ENCODE measurements at regions of chr20 and their contacts with region 1.

Region 1: DNA sequence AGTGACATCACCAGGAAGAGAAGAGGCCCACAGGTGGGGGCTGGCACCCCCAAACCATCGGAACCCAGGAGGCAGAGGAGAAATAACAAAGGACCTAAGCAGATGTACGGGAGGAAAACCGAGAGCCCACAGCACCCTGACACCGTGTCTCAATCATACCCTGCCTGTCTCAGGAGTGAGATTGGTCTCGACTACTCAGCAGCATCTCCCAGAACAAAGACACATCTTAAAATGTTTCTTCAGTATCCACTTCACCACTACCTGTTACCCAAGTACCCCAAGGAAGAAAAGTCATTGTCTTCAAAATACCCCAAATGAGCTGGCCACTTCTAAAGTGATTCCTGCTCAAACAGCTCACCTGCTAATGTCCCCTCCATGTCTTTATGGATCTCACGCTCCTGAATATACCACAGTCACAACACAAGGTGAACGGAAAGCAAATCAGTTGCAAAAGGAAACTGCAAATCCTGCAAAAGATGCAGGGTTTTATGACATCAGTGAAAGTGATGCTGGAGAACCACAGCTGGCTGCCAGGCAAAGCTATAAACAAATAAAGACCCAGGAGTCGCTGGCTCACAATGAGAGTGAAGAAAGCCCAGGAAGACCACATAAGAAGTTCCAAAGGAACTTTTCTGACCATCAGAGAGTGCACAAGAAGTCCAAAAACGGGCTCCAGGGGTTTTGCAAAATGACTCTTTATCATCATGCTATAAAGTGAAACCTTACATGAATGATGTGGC is 44.1 kb downstream of the PREX1 start:
- DNase-seq: peak; percentile 87
- H3K4me3 Mint-ChIP-seq: no peak overlapping the region
- H3K27ac Mint-ChIP-seq: no peak overlapping the region
- H3K4me1 Mint-ChIP-seq: peaks cover 38% of the 10 kb centered on the region
- H3K27me3 Mint-ChIP-seq: no peaks in the 10 kb centered on the region

Region 2: GRCh38 chr20:48760403-48760983 is 23.2 kb before region 1 on chr20:
- intact Hi-C with region 1: loop called (anchors 1 kb)
- DNase-seq: peak; percentile 93
- H3K4me3 Mint-ChIP-seq: peak overlapping the region; percentile 75
- H3K27ac Mint-ChIP-seq: peak overlapping the region; percentile 97
- H3K4me1 Mint-ChIP-seq: peaks cover 76% of the 10 kb centered on the region
- H3K27me3 Mint-ChIP-seq: no peaks in the 10 kb centered on the region

Region 3: DNA sequence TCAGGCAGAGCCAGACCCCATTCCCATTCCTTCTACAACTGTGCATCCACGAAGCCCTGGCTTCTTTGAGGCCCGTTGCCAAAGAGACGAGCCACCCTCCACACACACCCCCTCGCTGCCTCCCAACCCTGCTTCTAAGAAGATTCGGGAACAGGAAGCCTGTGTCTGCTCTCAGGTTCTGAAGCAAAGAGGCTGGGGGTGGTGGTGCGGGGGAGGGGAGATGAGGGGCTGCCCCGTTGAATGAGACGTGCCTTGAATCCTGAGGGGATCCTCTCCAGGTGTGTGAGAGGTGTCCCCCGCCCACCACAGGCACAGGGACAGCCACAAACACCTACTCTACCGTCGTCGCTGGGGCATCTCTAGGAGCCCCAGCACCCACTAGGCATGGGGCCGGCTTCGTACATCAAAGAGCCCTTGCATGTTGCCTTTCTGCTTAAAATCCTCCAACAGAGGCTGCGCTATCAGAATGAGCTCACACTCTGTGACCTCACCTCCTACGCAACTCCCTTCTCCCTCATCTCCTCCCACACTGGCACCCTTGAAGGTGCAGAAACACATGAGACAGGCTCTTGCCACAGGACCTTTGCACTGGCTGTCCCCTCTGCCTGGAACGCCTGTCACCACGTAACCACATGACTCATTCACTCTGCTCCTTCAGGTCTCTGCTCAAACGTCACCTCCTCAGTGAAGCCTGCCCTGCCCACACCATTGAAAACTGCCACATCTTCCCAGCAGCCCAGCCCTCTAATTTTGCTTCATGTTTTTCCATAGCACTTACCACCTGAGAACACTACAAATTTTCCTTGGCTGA is 14.4 kb before region 1 on chr20:
- intact Hi-C with region 1: loop called (anchors 1 kb)
- DNase-seq: peak; percentile 94
- H3K4me3 Mint-ChIP-seq: peak overlapping the region; percentile 64
- H3K27ac Mint-ChIP-seq: peak overlapping the region; percentile 94
- H3K4me1 Mint-ChIP-seq: peaks cover 81% of the 10 kb centered on the region
- H3K27me3 Mint-ChIP-seq: peaks cover 2% of the 10 kb centered on the region

Region 4: DNA sequence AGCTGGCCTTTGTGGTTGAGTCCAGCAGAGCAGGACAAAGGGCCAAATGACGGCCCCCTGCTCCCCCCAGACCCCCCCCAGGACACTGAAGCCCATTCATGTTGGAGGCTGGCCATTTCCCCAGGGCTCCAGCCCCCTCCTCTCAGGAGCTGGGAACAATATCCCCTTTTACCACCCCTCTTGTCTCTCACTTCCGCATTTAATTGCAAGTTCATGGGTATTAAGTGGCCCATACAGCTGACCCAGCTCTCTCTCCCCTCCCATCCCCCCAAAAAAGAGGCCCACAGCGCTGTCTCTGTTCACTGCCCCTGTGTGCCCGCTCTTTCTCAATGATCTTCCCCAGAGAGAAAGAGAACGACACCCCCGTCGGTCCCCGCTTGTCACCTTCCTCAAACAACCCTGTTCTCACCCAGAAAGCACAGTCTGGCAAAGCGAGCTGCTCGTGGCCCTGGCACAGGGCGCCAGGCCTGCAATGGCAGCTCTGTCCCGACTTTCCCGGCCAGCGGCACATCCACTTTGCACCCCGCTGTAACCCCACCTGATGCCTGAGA is 13.6 kb after region 1 on chr20:
- intact Hi-C with region 1: no loop called
- DNase-seq: no peak
- H3K4me3 Mint-ChIP-seq: no peak overlapping the region
- H3K27ac Mint-ChIP-seq: no peak overlapping the region
- H3K4me1 Mint-ChIP-seq: peaks cover 28% of the 10 kb centered on the region
- H3K27me3 Mint-ChIP-seq: no peaks in the 10 kb centered on the region

Region 5: GRCh38 chr20:48846498-48847485 is 63.1 kb after region 1 on chr20:
- intact Hi-C with region 1: loop called (anchors 1 kb)
- DNase-seq: peak; percentile 67
- H3K4me3 Mint-ChIP-seq: peak overlapping the region; percentile 23
- H3K27ac Mint-ChIP-seq: peak overlapping the region; percentile 89
- H3K4me1 Mint-ChIP-seq: peaks cover 21% of the 10 kb centered on the region
- H3K27me3 Mint-ChIP-seq: peaks cover 17% of the 10 kb centered on the region

Region 6: GRCh38 chr20:48904365-48905296 is 120.9 kb after region 1 on chr20:
- intact Hi-C with region 1: loop called (anchors 2 kb)
- DNase-seq: peak; percentile 91
- H3K4me3 Mint-ChIP-seq: no peak overlapping the region
- H3K27ac Mint-ChIP-seq: no peak overlapping the region
- H3K4me1 Mint-ChIP-seq: peaks cover 9% of the 10 kb centered on the region
- H3K27me3 Mint-ChIP-seq: peaks cover 4% of the 10 kb centered on the region